ENCODE measurements at regions of chr11 and their contacts with region 1.

Region 1: GRCh38 chr11:91947215-91947820 is 277.3 kb upstream of the FAT3 start:
- DNase-seq: peak in 3 of 5 donors; percentile 7 to 21 (median 18)
- ATAC-seq: peak in 3 of 4 donors; percentile 55 to 69 (median 65)
- H3K4me3 ChIP-seq: no peak overlapping the region
- H3K27ac ChIP-seq: no peak overlapping the region
- H3K4me1 ChIP-seq: peaks cover 0 to 24% (median 17%) of the 10 kb centered on the region in 12 donors
- H3K27me3 ChIP-seq: no peaks in the 10 kb centered on the region
- CTCF ChIP-seq: no peak
- POLR2A ChIP-seq: no peak

Region 2: GRCh38 chr11:91871791-91872190 is 75.5 kb before region 1 on chr11:
- intact Hi-C with region 1: no loop called
- DNase-seq: no peak
- ATAC-seq: no peak
- H3K4me3 ChIP-seq: no peak overlapping the region
- H3K27ac ChIP-seq: no peak overlapping the region
- H3K4me1 ChIP-seq: peaks cover 0 to 19% (median 0%) of the 10 kb centered on the region in 12 donors
- H3K27me3 ChIP-seq: no peaks in the 10 kb centered on the region
- CTCF ChIP-seq: no peak
- POLR2A ChIP-seq: no peak

Region 3: DNA sequence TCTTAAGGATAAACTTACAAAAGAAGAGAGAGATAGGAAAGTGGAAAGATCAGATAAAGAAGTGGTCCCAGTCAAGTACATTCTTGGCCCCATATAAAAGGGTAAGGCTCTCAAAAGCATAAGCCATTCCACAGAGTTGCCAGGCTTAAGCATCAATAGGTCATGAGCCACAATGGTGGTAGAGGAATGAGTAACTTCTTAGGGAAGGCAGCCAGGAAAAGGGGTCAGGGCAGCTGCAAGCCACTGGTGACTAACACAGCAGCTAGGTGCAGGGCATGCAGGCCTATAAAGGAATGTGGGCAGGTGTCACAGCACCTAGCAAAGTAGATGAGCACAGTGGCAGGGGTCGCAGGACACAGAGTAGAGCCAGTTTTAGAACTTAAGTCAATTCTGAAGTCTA is 25.3 kb before region 1 on chr11:
- intact Hi-C with region 1: loop called in 1 of 10 experiments (anchors 1 kb)
- DNase-seq: no peak
- ATAC-seq: no peak
- H3K4me3 ChIP-seq: no peak overlapping the region
- H3K27ac ChIP-seq: no peak overlapping the region
- H3K4me1 ChIP-seq: peaks cover 0 to 5% (median 0%) of the 10 kb centered on the region in 12 donors
- H3K27me3 ChIP-seq: no peaks in the 10 kb centered on the region
- CTCF ChIP-seq: no peak
- POLR2A ChIP-seq: no peak

Region 4: GRCh38 chr11:92002568-92002967 is 55.2 kb after region 1 on chr11:
- intact Hi-C with region 1: loop called in 1 of 10 experiments (anchors 10 kb)
- DNase-seq: no peak
- ATAC-seq: no peak
- H3K4me3 ChIP-seq: no peak overlapping the region
- H3K27ac ChIP-seq: no peak overlapping the region
- H3K4me1 ChIP-seq: no peaks in the 10 kb centered on the region
- H3K27me3 ChIP-seq: no peaks in the 10 kb centered on the region
- CTCF ChIP-seq: no peak
- POLR2A ChIP-seq: no peak

Measured in heart left ventricle (tissue), 16 donors.